Heart right ventricle (tissue), 16 donors: ENCODE measurements at regions of chr12 and their contacts with region 1.

Region 1: GRCh38 chr12:30473274-30473673 is 222.4 kb downstream of the IPO8 start:
- DNase-seq: no peak
- ATAC-seq: no peak
- H3K4me3 ChIP-seq: no peak overlapping the region
- H3K27ac ChIP-seq: no peak overlapping the region
- H3K4me1 ChIP-seq: no peaks in the 10 kb centered on the region
- H3K27me3 ChIP-seq: no peaks in the 10 kb centered on the region
- CTCF ChIP-seq: no peak

Region 2: GRCh38 chr12:30485230-30485890 is 12.1 kb after region 1 on chr12:
- intact Hi-C with region 1: loop called in 1 of 10 experiments (anchors 2 kb)
- DNase-seq: no peak
- ATAC-seq: no peak
- H3K4me3 ChIP-seq: no peak overlapping the region
- H3K27ac ChIP-seq: no peak overlapping the region
- H3K4me1 ChIP-seq: no peaks in the 10 kb centered on the region
- H3K27me3 ChIP-seq: no peaks in the 10 kb centered on the region
- CTCF ChIP-seq: no peak